PC-9 (cell line): ENCODE measurements at regions of chr4 and their contacts with region 1.

Region 1: GRCh38 chr4:137300776-137301175 is 231.5 kb downstream of the PCDH18 start:
- DNase-seq: no peak
- H3K4me3 ChIP-seq: no peak overlapping the region
- H3K27ac ChIP-seq: no peak overlapping the region
- H3K4me1 ChIP-seq: no peaks in the 10 kb centered on the region
- H3K27me3 ChIP-seq: no peaks in the 10 kb centered on the region
- CTCF ChIP-seq: no peak

Region 2: DNA sequence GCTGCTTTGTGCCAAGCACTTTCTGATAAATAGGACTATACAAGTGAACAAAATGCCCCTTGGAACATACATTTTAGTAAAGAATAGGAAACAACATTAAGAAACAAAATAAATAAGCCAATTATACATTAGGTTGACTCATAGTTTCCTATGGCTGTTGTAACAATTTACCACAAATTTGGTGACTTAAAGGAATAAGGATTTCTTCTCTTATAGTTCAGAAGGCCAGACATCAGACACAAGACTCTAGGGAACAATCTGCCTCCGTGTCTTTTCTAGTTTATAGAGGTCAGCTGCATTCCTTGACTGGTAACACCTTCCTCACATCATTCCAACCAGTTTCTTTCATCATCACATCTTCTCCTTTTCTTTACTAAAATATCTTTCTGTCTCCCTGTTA is 467.4 kb after region 1 on chr4:
- CTCF ChIA-PET with region 1: interaction called, 14 read pairs
- POLR2A ChIA-PET with region 1: no interaction called
- intact Hi-C with region 1: no loop called
- DNase-seq: no peak
- H3K4me3 ChIP-seq: no peak overlapping the region
- H3K27ac ChIP-seq: no peak overlapping the region
- H3K4me1 ChIP-seq: no peaks in the 10 kb centered on the region
- H3K27me3 ChIP-seq: no peaks in the 10 kb centered on the region
- CTCF ChIP-seq: no peak